CD8-positive, alpha-beta T cell (primary cell): ENCODE measurements at regions of chr3 and their contacts with region 1.

Region 1: DNA sequence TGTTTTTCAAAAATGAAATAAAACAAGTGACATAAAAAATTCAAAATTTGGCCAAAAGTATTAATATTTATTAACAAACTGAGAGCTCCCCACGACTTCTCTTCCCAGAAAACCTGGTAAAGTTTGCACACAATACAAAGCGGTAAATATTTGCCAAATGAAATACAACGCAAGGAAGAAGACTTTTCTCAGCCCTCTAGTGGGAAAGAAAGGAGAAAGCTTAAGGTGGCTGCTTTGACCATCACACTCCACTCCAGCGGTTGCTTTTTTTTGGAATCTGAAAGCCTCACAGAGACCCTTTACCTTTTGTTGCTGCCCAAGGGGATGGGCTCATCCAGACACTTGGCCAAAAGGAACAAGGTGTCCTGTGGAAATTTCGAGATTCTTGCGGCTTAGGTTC is 1.1 kb upstream of the GK5 start:
- DNase-seq: no peak
- ATAC-seq: no peak
- H3K4me3 ChIP-seq: no peak overlapping the region
- H3K4me3 Mint-ChIP-seq: peak overlapping the region; percentile 62
- H3K27ac ChIP-seq: no peak overlapping the region
- H3K27ac Mint-ChIP-seq: no peak overlapping the region
- H3K4me1 ChIP-seq: peaks cover 4% of the 10 kb centered on the region
- H3K4me1 Mint-ChIP-seq: peaks cover 17% of the 10 kb centered on the region
- H3K27me3 ChIP-seq: no peaks in the 10 kb centered on the region
- H3K27me3 Mint-ChIP-seq: no peaks in the 10 kb centered on the region
- CTCF ChIP-seq: no peak

Region 2: DNA sequence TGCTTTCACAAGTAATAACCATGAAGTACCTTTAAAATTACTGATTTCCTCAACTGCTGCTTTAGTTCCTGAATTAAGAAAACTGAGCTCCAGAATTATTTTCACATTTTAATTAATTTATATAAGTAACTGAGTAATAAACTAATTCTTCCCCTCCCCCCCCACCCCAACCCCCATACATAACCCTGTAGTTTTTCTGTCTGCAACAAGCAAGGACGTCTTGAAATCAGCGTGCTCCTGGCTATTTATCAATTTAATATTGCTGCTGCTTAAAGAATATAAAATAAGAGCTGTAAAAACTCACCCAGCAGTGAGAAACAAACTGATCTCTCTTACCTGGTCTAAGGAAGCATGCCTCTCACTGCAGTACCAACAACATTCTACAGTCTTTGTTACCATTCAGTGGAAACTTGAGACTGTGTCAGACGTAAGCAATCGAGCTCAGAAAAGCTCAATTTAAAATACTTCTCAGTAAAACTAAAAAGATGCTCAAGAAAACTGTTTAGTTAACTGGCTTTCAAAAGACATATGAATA is 198.2 kb before region 1 on chr3:
- CTCF ChIA-PET with region 1: no interaction called
- POLR2A ChIA-PET with region 1: no interaction called
- intact Hi-C with region 1: loop called in 1 of 2 experiments (anchors 5 kb)
- DNase-seq: peak in 5 of 9 experiments; percentile 14 to 77 (median 28)
- ATAC-seq: peak; percentile 88
- H3K4me3 ChIP-seq: peak overlapping the region; percentile 44 to 55
- H3K4me3 Mint-ChIP-seq: peak overlapping the region; percentile 85
- H3K27ac ChIP-seq: no peak overlapping the region
- H3K27ac Mint-ChIP-seq: peak overlapping the region; percentile 69
- H3K4me1 ChIP-seq: peaks cover 6% of the 10 kb centered on the region
- H3K4me1 Mint-ChIP-seq: peaks cover 14% of the 10 kb centered on the region
- H3K27me3 ChIP-seq: no peaks in the 10 kb centered on the region
- H3K27me3 Mint-ChIP-seq: no peaks in the 10 kb centered on the region
- CTCF ChIP-seq: no peak

Region 3: DNA sequence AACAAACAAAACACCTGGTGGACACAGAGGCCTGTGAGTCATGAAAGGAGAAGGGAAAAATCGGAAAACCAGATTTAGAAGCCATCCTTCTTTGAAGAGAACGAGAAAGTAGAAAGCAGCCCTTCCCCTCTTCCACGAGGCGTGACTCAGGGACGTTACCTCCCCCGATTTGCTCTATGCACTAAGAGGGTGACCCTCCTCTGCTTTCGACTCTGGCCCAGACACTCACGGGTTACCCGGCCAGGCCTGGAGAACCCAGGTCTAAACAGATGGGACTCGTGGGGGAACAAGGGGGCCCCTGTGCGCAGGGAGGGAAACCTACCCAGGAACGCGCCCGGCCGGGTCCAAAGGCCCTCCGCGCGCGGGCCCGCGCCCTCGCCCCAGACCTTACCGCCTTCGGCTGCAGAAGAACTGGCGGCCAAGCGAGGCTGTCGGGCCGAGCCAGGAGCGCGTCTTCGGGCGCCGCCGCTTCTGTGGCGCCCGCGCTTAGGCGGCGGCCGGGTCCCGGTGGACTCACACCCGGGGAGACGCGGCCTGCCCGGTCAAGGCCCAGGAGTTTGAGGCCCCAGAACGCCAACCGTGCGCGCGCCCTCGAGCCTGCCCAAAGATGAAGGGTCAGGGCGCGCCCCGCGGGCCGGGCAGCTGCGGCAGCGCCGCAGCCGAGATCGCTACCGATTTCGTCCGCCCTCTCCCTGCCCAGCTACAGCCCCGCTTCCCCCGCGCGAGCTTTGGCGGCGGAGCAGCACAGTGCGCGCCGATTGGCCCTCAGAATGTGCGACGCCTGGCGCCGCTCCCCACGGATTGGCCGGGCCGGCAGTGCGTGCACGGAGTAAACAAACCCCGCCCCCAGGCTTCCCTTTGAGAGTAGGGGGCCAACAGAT is 77.5 kb before region 1 on chr3 and contains the start of gene TFDP2:
- CTCF ChIA-PET with region 1: no interaction called
- POLR2A ChIA-PET with region 1: no interaction called
- intact Hi-C with region 1: loop called (anchors 1 to 5 kb)
- DNase-seq: peak; percentile 68 to 92 (median 85)
- ATAC-seq: peak; percentile 98
- H3K4me3 ChIP-seq: peak within 1 kb of the TSS; percentile 69 to 74
- H3K4me3 Mint-ChIP-seq: peak within 1 kb of the TSS; percentile 89
- H3K27ac ChIP-seq: peak within 1 kb of the TSS; percentile 67 to 73
- H3K27ac Mint-ChIP-seq: peak within 1 kb of the TSS; percentile 85
- H3K4me1 ChIP-seq: peaks cover 17% of the 10 kb centered on the region
- H3K4me1 Mint-ChIP-seq: peaks cover 32% of the 10 kb centered on the region
- H3K27me3 ChIP-seq: no peaks in the 10 kb centered on the region
- H3K27me3 Mint-ChIP-seq: no peaks in the 10 kb centered on the region
- CTCF ChIP-seq: no peak
- total RNA-seq, gene TFDP2: 37.0 to 43.0 TPM

Region 4: DNA sequence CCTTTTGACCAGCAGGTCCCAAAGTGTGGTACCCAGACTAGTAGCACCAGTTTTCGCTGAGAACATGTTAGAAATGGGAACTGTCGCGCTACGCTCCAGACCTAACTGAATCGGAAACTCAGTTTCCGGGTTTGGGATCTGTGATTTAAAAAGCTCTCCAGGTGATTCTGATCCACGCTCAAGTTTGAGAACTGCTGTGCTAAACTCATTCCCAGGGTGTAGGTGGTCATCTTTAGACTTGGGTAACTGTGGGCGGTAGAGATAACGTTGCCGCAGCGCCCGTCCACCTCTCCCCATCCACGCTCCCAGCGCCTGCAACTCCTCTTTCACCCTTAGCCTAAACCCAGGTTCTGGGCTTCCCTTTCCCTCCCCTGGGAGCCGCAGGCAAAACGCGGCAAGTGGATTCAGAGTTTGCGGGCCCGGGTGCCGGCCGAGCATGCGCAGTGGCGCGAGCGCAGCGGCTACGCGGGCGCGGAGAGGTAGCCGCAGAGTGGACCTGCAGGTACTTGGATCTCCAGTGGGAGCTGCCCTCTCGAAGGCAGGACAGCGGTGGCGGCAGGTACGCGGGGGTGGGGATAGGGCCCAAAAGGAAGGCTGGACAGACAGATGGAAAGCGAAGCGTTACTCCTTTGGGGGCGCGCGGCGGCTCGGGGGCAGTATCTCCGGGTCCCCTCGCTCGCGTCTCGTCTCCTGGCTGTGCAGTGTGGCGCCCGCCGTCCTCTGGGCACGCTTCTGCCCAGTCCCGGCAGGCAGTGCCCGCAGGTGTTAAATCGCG is 369.7 kb after region 1 on chr3 and contains the start of gene PLS1:
- CTCF ChIA-PET with region 1: no interaction called
- POLR2A ChIA-PET with region 1: no interaction called
- intact Hi-C with region 1: loop called in 1 of 2 experiments (anchors 10 kb)
- DNase-seq: peak; percentile 74 to 91 (median 83)
- ATAC-seq: peak; percentile 87
- H3K4me3 ChIP-seq: peak within 1 kb of the TSS; percentile 75 to 84
- H3K4me3 Mint-ChIP-seq: peak within 1 kb of the TSS; percentile 96
- H3K27ac ChIP-seq: peak within 1 kb of the TSS; percentile 28 to 34
- H3K27ac Mint-ChIP-seq: peak within 1 kb of the TSS; percentile 89
- H3K4me1 ChIP-seq: peaks cover 17% of the 10 kb centered on the region
- H3K4me1 Mint-ChIP-seq: peaks cover 17% of the 10 kb centered on the region
- H3K27me3 ChIP-seq: no peaks in the 10 kb centered on the region
- H3K27me3 Mint-ChIP-seq: peaks cover 11% of the 10 kb centered on the region
- CTCF ChIP-seq: no peak
- total RNA-seq, gene PLS1: 0.57 to 2.0 TPM